PC-3 (cell line): ENCODE measurements at regions of chr1 and their contacts with region 1.

Region 1: DNA sequence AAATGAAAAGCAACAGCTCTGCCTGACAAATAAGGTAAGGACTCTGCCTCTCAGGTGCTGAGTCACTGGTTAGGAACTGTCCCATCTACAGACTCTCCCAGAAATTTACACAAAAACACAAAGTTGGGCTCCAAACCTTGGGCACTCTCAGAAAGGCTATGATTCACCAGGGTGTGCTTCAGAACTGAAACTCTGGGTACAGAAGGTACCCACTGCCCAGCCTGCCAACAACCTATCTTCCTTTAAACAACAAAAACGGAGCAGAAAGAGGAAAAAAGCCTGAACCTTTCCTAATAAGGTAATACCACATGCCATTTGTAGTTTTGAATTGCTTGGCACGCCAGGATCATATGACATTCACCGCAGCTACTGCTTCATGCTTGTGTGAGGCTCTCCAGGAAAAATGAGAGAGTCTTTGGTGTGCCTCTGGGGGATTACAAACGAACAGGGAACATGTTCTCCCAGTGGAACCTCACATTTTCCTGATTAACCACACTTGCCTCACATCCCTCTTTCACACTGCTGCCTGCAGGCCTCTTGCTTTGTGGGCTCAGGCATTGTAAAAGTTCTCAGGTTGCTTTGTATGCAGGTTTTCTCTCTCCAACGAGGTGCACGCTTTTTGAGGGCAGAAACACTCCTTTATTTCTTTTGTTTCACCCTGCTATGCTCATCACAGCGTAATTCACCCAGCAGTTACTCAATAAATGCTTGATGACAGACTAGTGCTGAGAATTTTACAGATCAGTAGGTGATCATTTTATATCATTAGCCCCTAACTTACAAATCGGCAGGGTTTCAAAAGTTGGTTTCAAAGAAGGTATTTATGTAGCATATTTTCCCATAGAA is 65.1 kb downstream of the GADD45A start:
- DNase-seq: peak; percentile 91
- ATAC-seq: peak; percentile 91
- H3K4me3 ChIP-seq: peak overlapping the region; percentile 53
- H3K27ac ChIP-seq: peak overlapping the region; percentile 96
- H3K4me1 ChIP-seq: peaks cover 72% of the 10 kb centered on the region
- H3K27me3 ChIP-seq: no peaks in the 10 kb centered on the region
- CTCF ChIP-seq: no peak

Region 2: GRCh38 chr1:67608661-67609571 is 141.2 kb before region 1 on chr1:
- CTCF ChIA-PET with region 1: no interaction called
- POLR2A ChIA-PET with region 1: no interaction called
- intact Hi-C with region 1: no loop called
- DNase-seq: no peak
- ATAC-seq: no peak
- H3K4me3 ChIP-seq: no peak overlapping the region
- H3K27ac ChIP-seq: no peak overlapping the region
- H3K4me1 ChIP-seq: peaks cover 10% of the 10 kb centered on the region
- H3K27me3 ChIP-seq: no peaks in the 10 kb centered on the region
- CTCF ChIP-seq: no peak

Region 3: DNA sequence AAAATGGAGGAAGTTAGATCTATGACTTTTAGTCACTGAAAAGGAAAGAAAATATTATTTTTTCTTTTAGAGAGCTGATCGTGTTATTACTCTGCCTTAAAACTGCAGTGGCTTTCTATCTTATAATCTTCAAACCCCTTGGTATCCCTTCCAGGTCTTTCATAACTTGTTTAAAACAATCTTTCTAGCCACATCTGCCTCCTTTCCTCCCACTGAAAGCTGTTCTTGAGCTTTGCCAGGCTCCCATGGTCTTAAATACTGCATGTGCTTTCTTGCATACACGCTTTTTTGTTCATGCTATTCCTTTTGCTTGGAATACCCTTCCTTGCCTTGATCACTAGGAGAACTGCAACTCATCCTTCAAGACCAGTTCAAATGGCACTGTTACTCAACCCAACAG is 131.0 kb before region 1 on chr1:
- CTCF ChIA-PET with region 1: no interaction called
- POLR2A ChIA-PET with region 1: no interaction called
- intact Hi-C with region 1: no loop called
- DNase-seq: no peak
- ATAC-seq: no peak
- H3K4me3 ChIP-seq: peak overlapping the region; percentile 44
- H3K27ac ChIP-seq: no peak overlapping the region
- H3K4me1 ChIP-seq: peaks cover 24% of the 10 kb centered on the region
- H3K27me3 ChIP-seq: no peaks in the 10 kb centered on the region
- CTCF ChIP-seq: no peak

Region 4: GRCh38 chr1:67716800-67717199 is 33.3 kb before region 1 on chr1:
- CTCF ChIA-PET with region 1: no interaction called
- POLR2A ChIA-PET with region 1: no interaction called
- intact Hi-C with region 1: loop called (anchors 5 kb)
- DNase-seq: peak; percentile 88
- ATAC-seq: peak; percentile 54
- H3K4me3 ChIP-seq: no peak overlapping the region
- H3K27ac ChIP-seq: peak overlapping the region; percentile 27
- H3K4me1 ChIP-seq: peaks cover 56% of the 10 kb centered on the region
- H3K27me3 ChIP-seq: no peaks in the 10 kb centered on the region
- CTCF ChIP-seq: no peak

Region 5: GRCh38 chr1:67729872-67730271 is 20.2 kb before region 1 on chr1:
- CTCF ChIA-PET with region 1: no interaction called
- POLR2A ChIA-PET with region 1: no interaction called
- intact Hi-C with region 1: loop called (anchors 2 kb)
- DNase-seq: peak; percentile 85
- ATAC-seq: peak; percentile 67
- H3K4me3 ChIP-seq: no peak overlapping the region
- H3K27ac ChIP-seq: peak overlapping the region; percentile 86
- H3K4me1 ChIP-seq: peaks cover 40% of the 10 kb centered on the region
- H3K27me3 ChIP-seq: no peaks in the 10 kb centered on the region
- CTCF ChIP-seq: no peak